ENCODE measurements at regions of chr9 and their contacts with region 1.

Region 1: GRCh38 chr9:119234636-119235035 is 134.6 kb downstream of the BRINP1 start:
- DNase-seq: peak; percentile 23
- H3K4me3 ChIP-seq: no peak overlapping the region
- H3K27ac ChIP-seq: no peak overlapping the region
- H3K4me1 ChIP-seq: no peaks in the 10 kb centered on the region
- H3K27me3 ChIP-seq: no peaks in the 10 kb centered on the region
- CTCF ChIP-seq: no peak

Region 2: DNA sequence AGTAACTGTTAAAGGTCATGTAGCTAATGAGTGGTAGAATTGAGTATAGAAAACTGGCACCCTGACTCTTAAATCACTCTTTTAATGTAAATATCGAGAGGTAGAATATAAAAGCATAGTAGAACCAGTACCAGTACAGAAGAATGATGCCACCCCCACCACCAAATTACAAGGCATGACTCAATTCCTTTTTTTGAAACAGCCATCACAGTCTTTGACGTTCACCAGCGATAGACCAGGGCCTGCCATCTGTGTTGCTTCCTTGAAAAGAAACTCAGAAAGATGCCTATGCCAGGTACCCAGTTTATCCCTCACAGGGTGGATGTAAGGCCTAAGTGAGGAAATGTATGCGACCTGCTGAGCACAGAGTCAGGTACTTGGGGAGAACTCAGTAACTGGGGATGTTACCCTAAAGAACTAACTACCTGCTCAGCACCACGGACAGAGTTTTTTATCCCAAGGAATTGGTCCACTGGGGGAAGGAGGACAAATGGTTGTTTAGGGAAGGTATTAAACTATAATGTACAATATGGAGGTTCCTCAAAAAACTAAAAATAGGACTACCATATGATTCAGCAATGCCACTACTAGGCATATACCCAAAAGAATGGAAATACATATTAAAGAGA is 18.1 kb after region 1 on chr9:
- CTCF ChIA-PET with region 1: interaction called, 15 read pairs
- dilution Hi-C with region 1: no loop called
- in situ Hi-C with region 1: no loop called
- intact Hi-C with region 1: no loop called
- DNase-seq: no peak
- H3K4me3 ChIP-seq: no peak overlapping the region
- H3K27ac ChIP-seq: no peak overlapping the region
- H3K4me1 ChIP-seq: no peaks in the 10 kb centered on the region
- H3K27me3 ChIP-seq: no peaks in the 10 kb centered on the region
- CTCF ChIP-seq: no peak

Region 3: GRCh38 chr9:119273984-119274665 is 39.5 kb after region 1 on chr9:
- CTCF ChIA-PET with region 1: no interaction called
- dilution Hi-C with region 1: no loop called
- in situ Hi-C with region 1: no loop called
- intact Hi-C with region 1: no loop called
- DNase-seq: peak; percentile 39
- H3K4me3 ChIP-seq: no peak overlapping the region
- H3K27ac ChIP-seq: no peak overlapping the region
- H3K4me1 ChIP-seq: no peaks in the 10 kb centered on the region
- H3K27me3 ChIP-seq: no peaks in the 10 kb centered on the region
- CTCF ChIP-seq: no peak

Region 4: GRCh38 chr9:119318371-119318770 is 83.7 kb after region 1 on chr9:
- CTCF ChIA-PET with region 1: no interaction called
- dilution Hi-C with region 1: no loop called
- in situ Hi-C with region 1: no loop called
- intact Hi-C with region 1: no loop called
- DNase-seq: peak; percentile 80
- H3K4me3 ChIP-seq: no peak overlapping the region
- H3K27ac ChIP-seq: no peak overlapping the region
- H3K4me1 ChIP-seq: no peaks in the 10 kb centered on the region
- H3K27me3 ChIP-seq: no peaks in the 10 kb centered on the region
- CTCF ChIP-seq: peak in 1 of 2 donors; percentile 40